Left colon (tissue), 2 donors: ENCODE measurements at regions of chr9 and their contacts with region 1.

Region 1: DNA sequence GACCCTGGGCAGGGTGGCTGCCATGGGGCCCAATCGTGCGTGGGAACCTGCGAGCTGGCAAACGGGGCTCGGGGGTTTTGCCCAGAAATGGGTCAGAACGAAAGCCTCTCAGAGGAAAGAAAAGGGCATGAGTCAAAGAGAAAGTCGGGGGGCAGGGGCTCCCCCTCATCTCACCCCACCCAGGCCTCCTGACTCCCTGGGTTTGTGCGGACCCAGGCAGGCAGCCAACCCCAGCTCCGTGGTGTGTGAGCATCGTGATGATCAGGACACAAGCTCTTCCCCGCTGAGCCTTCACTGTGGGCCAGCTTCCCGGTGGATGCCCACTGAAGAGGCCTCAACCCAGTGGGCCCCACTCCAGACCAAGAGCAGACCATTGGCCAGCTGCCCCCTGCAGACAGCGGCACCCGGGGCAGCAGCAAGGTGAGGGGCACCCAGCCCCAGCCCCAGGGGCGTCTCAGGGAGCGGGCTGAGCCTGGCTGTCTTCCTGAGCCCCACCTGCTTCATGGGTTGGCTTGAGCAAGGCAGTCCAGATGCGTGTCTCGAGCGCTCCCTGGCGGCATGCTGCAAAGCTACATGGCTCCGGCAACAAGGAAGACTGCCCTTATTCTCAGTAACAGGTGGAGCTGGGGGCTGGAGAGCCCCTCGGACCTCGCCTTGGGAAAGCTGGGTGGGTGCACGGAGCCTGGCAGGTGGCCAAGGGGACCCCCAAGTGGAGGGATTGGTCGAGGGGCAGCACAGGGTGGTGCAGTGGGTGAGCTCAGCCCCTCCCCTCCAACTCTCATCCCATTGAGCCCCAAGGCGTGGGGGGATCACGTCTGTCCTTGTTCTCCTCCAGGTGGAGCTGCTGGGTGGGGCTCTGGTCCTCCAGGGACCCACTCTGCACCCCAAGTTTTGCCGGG is 3.2 kb upstream of the FUT7 start:
- DNase-seq: peak; percentile 80 to 81
- ATAC-seq: peak; percentile 84

Region 2: GRCh38 chr9:136773386-136774044 is 261.6 kb before region 1 on chr9:
- intact Hi-C with region 1: no loop called
- DNase-seq: no peak
- ATAC-seq: peak; percentile 20

Region 3: DNA sequence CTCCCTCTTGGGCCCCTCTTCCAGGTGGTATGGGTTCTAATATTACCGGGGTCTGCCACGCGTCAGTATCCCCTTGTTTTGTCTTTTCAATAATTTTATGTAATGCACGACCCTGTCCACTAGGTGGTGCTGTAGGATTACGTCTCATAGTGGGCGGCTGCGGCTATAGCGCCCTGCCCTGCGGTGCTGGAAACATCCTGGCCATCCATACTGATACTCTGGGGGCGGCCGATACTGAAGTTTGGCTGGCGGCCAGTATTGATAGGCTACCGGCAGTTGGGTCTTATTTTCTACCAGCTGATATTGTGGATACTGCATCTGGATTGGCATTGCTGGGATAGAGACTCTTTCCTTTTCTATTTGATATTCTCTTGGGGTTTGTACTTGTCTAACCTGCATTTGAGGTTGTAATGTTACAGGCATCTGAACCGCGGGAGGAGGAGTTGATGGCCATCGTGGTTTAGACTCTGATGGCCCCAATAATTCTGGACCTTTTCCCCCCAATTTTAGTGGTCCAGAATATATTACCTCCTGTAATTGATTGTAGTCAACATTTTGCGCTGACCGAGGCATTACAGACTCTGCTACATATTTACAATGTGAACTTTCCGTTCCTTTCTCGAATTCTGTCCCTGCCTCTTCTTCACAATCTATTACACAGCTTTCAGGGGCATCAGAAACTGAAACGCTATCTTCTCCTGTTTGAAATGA is 247.3 kb before region 1 on chr9:
- intact Hi-C with region 1: loop called in 1 of 2 experiments (anchors 5 kb)
- DNase-seq: peak; percentile 75 to 81
- ATAC-seq: peak; percentile 16